ENCODE measurements at regions of chr1 and their contacts with region 1.

Region 1: DNA sequence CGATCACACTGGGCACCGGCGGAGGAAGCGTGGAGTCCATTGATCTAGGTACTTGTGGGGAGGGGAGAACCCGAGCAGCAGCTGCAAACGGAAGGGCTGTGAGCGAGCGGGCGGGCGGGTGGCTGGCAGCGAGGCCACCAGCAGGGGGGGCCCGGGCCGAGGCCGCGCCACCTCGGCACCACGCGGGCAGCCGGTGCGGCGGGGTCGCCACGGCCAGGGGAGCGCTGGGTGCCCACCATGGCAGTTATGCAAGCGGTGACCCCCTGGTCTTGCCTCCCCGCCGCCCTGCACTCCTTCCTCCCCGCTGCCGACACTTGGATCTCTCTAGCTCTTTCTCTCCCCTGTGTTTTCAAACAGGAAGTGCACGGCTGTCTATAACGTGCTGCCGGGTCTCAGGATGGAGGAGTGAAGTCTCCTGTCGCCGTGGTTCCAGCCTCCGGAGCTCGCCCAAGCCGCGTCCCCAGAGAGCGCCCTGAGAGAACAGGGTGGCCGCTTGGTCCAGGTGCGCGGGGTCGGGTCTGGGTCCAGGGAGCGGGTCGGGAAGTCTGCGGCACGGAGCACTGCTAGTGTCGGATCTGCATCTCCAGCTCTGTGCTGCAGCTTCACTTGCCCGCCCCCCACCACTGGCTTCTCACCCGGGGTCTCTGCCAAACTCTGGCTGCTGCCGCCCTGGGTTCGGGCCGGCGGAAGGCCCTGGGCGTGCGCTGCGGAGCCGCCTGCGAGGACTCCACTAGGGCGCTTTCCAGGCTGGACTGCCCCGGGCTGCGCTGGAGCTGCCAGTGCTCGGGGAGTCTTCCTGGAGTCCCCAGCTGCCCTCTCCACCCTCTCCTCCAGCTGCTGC is 22.7 kb downstream of the LRRC8D start:
- DNase-seq: peak; percentile 69
- H3K4me3 Mint-ChIP-seq: peak overlapping the region; percentile 93
- H3K27ac Mint-ChIP-seq: peak overlapping the region; percentile 91
- H3K4me1 Mint-ChIP-seq: peaks cover 81% of the 10 kb centered on the region
- H3K27me3 Mint-ChIP-seq: no peaks in the 10 kb centered on the region

Region 2: DNA sequence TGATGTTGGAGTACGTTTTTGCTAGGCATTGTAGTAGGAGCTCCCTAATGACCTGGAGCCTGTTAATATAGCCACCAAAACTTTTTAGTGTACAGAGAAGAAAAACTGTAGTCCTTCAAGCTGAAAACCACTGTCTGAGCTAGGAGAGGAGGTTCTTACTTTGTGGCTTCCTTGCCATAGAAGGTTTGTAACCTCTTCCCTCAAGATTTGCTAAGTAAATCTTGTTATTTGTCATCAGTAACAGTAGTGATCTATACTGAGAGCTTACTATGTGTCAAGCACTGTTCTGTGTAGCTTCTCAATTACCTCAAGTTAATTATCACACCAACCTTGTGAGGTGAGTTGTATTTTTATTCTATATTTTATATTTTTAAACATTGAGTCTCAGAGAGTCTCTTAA is 231.8 kb before region 1 on chr1:
- intact Hi-C with region 1: loop called (anchors 5 kb)
- DNase-seq: no peak
- H3K4me3 Mint-ChIP-seq: peak overlapping the region; percentile 73
- H3K27ac Mint-ChIP-seq: peak overlapping the region; percentile 99
- H3K4me1 Mint-ChIP-seq: peaks cover 88% of the 10 kb centered on the region
- H3K27me3 Mint-ChIP-seq: no peaks in the 10 kb centered on the region

Region 3: DNA sequence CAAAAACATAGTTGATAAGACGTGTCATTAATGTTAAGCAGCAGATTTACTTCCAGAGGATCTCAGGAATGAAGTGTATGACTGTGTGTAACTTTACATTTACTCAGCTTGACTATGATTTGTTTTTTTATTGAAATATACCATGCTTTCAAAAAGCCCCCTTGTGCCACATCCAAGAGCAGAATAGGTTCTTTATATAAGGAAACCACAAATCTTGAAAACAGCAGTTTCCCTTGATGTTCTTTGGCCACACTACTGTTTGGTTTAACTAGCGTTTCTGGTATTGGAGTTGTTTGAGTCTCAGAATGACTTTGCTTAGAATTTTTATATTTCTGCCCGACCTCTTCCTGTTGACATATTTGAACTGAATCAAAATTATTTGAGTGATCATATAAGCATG is 185.6 kb before region 1 on chr1:
- intact Hi-C with region 1: no loop called
- DNase-seq: peak; percentile 24
- H3K4me3 Mint-ChIP-seq: peak overlapping the region; percentile 62
- H3K27ac Mint-ChIP-seq: peak overlapping the region; percentile 72
- H3K4me1 Mint-ChIP-seq: peaks cover 91% of the 10 kb centered on the region
- H3K27me3 Mint-ChIP-seq: no peaks in the 10 kb centered on the region

Region 4: GRCh38 chr1:89780721-89781120 is 62.8 kb before region 1 on chr1:
- intact Hi-C with region 1: loop called (anchors 1 kb)
- DNase-seq: no peak
- H3K4me3 Mint-ChIP-seq: peak overlapping the region; percentile 59
- H3K27ac Mint-ChIP-seq: peak overlapping the region; percentile 97
- H3K4me1 Mint-ChIP-seq: peaks cover 48% of the 10 kb centered on the region
- H3K27me3 Mint-ChIP-seq: peaks cover 4% of the 10 kb centered on the region

Region 5: GRCh38 chr1:89820422-89821321 is 22.8 kb before region 1 on chr1 and contains the start of gene LRRC8D:
- intact Hi-C with region 1: loop called (anchors 1 kb)
- DNase-seq: peak; percentile 72
- H3K4me3 Mint-ChIP-seq: peak within 1 kb of the TSS; percentile 84
- H3K27ac Mint-ChIP-seq: peak within 1 kb of the TSS; percentile 68
- H3K4me1 Mint-ChIP-seq: peaks cover 15% of the 10 kb centered on the region
- H3K27me3 Mint-ChIP-seq: peaks cover 8% of the 10 kb centered on the region
- total RNA-seq, gene LRRC8D: 43.3 and 45.0 TPM in 2 replicates

Region 6: DNA sequence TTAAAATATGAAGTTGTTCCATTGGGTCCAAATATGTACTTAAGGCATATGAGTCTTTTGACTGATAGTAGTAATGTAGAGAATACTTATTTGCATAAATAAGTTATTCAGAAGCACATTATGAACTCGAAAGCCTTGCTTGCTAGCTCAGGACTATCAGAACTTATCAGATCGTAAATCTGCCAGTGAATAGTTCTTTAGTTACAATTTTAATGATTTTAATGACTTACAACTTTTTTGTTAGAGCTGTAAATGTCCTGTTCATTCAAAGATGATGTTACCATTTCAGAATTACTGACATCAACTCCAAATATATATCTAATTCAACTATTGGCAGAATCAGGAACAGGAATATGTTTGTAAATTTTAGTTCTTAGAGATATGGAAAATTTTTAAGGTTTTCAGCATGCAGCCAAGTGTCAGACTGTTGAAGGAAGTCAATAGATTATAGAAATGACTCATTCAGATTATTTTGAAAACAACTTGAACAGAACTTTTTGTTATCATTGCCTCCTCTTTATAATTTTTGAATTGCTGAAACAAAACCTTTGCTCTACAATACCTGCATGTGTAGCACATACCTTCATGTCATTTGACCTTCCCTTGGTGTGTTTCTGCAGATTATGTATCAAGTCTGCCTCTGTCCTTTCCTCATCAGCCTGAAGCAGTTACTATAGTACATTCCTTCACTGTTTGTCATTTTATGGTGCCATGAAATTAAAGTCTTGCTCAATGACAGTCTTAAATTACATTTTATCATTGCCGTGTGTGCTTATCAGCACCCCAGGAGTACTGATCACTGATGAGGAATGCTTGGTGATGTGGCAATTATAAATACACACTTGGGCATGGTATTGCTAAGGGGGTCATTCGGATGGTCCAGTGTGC is 22.2 kb after region 1 on chr1:
- intact Hi-C with region 1: loop called (anchors 2 kb)
- DNase-seq: no peak
- H3K4me3 Mint-ChIP-seq: no peak overlapping the region
- H3K27ac Mint-ChIP-seq: peak overlapping the region; percentile 25
- H3K4me1 Mint-ChIP-seq: peaks cover 68% of the 10 kb centered on the region
- H3K27me3 Mint-ChIP-seq: no peaks in the 10 kb centered on the region

Region 7: DNA sequence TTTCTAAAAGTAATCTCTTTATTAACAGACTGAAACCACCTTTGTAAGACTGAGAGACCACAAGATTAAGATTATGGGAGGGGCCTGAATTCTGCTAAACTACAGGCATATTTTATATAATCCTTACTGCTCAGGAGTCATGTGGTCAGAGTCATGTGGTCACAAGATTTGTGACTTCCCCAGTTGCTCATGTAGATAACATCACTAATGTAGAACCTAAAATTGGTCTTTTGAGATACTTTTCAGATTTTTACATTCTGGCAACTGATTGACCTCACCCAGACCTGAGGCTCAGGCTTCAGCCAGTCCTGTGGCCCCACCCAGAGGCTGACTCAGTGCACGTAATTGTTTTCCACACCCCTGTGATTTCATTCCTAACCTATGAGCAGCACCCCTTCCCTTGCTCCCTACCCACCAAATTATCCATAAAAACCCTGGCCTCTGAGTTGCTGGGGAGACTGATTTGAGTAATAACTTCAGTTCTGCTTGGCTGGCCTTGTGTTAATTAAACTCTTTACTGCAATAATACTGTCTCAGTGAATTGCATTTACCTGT is 109.6 kb after region 1 on chr1:
- intact Hi-C with region 1: loop called (anchors 2 kb)
- DNase-seq: no peak
- H3K4me3 Mint-ChIP-seq: no peak overlapping the region
- H3K27ac Mint-ChIP-seq: no peak overlapping the region
- H3K4me1 Mint-ChIP-seq: peaks cover 47% of the 10 kb centered on the region
- H3K27me3 Mint-ChIP-seq: no peaks in the 10 kb centered on the region

Region 8: DNA sequence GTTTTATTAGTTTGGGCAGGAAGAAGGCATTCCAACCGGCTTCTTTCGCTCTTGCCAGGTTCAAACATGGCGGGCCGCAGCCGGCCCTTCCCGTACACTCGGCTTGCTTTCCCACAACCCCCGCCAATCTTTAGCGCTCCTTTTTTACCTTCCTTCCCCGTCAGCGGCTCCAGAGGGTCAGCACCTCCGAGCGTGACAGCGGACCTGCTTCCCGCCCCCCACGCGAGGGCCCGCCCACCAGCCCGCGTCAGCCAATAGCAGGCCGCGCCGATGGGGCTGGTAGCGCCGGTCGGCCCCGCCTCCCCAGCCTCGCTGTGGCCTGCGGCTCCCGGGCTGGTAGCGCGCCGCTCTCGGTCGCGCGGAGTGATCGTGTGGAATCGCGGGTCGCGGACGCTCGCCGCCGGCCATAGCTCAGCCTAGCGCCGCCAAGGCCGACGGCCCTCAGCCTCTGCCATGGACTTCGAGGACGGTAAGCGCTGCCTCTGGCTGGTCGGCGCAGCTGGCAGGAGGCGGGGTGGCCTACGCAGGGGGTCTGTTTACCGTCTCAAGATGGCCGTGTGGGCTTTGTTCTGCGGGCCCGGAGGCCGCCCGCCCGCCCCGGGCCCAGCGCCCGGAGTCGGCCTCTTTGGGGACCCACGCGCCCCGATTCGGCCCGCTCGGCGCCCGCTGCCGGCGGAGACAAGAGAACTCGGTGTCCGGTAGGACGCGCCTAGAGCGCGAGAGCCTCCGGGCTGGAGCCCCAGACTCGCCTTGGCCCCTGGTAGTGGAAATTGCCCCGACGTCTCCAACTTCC is 151.5 kb after region 1 on chr1 and contains the start of gene ZNF326:
- intact Hi-C with region 1: loop called (anchors 1 kb)
- DNase-seq: peak; percentile 93
- H3K4me3 Mint-ChIP-seq: peak within 1 kb of the TSS; percentile 99
- H3K27ac Mint-ChIP-seq: peak within 1 kb of the TSS; percentile 97
- H3K4me1 Mint-ChIP-seq: peaks cover 46% of the 10 kb centered on the region
- H3K27me3 Mint-ChIP-seq: no peaks in the 10 kb centered on the region
- total RNA-seq, gene ZNF326: 37.3 and 39.1 TPM in 2 replicates

Measured in activated T-helper 1 cell treated with anti-CD3 and anti-CD28 coated beads, Interleukin-12 subunit alpha, Interleukin-12 subunit beta, Interleukin-2, Interleukin-4 antibody, amounts not matched to agents 30 ng/mL and 10 ng/mL and 1 ng/mL, durations not matched to agents 14 hours and 24 hours and 36 hours (primary cell).